Ascending aorta (tissue), 2 donors: ENCODE measurements at regions of chrX and their contacts with region 1.

Region 1: DNA sequence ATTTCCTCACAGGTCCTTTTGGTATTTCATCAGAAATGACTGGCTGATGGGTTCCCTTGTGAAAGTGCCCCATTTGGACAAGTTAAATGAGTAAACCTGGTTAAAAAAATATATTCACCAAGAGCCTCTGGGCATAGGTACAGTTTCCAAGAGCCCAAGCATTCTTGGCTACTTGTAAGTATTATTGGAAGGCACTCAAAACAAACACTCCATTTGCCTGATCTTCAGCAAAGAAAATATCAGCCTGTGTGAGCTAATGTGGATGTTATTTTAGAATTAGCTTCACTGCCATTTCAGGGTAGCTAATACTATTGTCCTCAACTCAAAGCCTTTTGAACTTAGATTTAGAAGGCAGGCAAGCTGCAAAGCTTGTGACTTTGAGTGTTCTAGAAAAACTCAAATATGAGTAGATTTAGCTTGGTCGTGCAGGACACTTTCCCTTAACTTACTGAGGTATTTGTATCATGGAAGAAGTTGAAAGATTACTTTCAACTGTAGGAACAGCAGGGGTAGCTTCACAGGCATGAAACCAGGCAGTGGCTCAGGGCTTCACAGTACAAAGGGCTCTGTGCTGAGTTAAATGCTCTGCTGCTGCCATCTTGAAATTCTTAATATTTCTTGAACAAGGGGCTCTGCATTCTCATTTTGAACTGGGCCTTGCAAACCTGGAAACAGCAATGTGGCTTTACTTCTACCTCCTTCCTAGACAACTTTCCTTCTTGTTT is 177.2 kb downstream of the AMELX start:
- DNase-seq: no peak
- H3K4me3 ChIP-seq: no peak overlapping the region
- H3K27ac ChIP-seq: peak overlapping the region; percentile 46 to 73
- H3K4me1 ChIP-seq: peaks cover 0 to 33% of the 10 kb centered on the region in 2 donors
- H3K27me3 ChIP-seq: no peaks in the 10 kb centered on the region
- CTCF ChIP-seq: no peak

Region 2: DNA sequence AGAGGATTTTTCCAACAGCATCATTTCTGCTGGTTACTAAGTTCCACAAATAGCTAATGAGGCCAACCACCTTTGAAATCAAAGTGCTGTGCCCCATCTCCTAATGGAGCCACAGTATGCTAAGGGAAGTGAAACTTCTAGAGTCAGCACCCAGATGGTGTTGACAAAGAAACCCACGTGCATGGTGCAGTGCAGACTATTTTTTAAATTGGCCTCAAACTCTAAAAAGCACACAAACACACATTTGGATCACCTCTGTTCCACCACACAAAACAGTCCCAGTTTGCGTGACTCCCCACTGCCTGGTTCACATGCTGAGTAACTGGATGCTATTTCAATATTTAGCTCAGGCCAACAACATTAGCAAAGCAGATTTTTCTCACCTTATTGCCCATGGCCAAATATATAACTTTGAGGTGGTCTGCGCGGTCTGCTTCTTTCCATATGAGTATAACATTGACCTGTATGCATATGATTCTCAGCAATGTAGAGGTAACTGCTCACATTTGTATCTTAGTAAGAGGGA is 107.3 kb before region 1 on chrX:
- intact Hi-C with region 1: no loop called
- DNase-seq: no peak
- H3K4me3 ChIP-seq: no peak overlapping the region
- H3K27ac ChIP-seq: no peak overlapping the region
- H3K4me1 ChIP-seq: no peaks in the 10 kb centered on the region
- H3K27me3 ChIP-seq: no peaks in the 10 kb centered on the region
- CTCF ChIP-seq: no peak

Region 3: DNA sequence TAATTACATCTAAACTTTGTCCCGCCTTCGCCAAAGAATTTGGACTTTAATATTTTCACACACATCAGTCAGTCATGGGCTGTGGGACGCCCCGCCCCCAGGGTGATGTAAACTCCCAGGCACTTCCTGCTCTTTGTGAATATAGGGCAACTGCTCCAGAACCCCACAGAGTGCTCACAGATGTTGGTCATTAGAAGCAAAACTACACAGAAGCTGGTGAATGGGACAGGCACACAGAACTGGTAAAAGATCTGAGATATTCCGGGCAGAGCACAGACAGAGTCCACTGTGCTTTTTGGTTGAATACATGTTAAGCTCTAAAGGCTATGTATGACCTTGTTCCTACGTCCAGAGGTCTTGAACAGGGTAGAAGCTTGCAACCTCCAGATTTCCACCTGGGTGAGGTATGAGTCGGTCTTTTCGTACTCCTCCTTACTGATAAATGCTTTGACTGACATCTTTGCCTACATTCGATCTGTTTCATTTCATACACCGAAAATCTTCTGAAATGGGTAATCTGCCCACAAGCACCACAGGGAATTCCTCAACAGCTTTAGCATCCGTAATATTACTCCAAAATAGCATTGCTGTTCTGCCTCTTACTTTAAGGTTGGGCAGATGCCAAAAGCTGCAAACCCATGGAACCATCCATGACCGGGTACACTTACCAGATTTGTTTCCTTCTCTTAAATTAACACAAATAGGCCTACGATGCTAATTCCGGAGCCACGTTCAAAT is 32.6 kb before region 1 on chrX:
- intact Hi-C with region 1: loop called (anchors 5 kb)
- DNase-seq: peak; percentile 23 to 88
- H3K4me3 ChIP-seq: peak overlapping the region in 1 of 2 donors; percentile 43
- H3K27ac ChIP-seq: peak overlapping the region; percentile 75 to 76
- H3K4me1 ChIP-seq: peaks cover 0 to 8% of the 10 kb centered on the region in 2 donors
- H3K27me3 ChIP-seq: no peaks in the 10 kb centered on the region
- CTCF ChIP-seq: no peak

Region 4: GRCh38 chrX:11446331-11446730 is 24.1 kb before region 1 on chrX:
- intact Hi-C with region 1: loop called (anchors 2 kb)
- DNase-seq: no peak
- H3K4me3 ChIP-seq: no peak overlapping the region
- H3K27ac ChIP-seq: peak overlapping the region; percentile 70 to 79
- H3K4me1 ChIP-seq: peaks cover 0 to 17% of the 10 kb centered on the region in 2 donors
- H3K27me3 ChIP-seq: no peaks in the 10 kb centered on the region
- CTCF ChIP-seq: no peak